ENCODE measurements at regions of chr14 and their contacts with region 1.

Region 1: GRCh38 chr14:73675037-73675436 is 30.3 kb downstream of the DNAL1 start:
- DNase-seq: no peak
- ATAC-seq: no peak
- H3K4me3 ChIP-seq: no peak overlapping the region
- H3K27ac ChIP-seq: no peak overlapping the region
- H3K4me1 ChIP-seq: peaks cover 5% of the 10 kb centered on the region; the same call in 1 of the 3 replicates
- CTCF ChIP-seq: no peak
- EP300 ChIP-seq: no peak
- POLR2A ChIP-seq: no peak
- RAD21 ChIP-seq: no peak

Region 2: DNA sequence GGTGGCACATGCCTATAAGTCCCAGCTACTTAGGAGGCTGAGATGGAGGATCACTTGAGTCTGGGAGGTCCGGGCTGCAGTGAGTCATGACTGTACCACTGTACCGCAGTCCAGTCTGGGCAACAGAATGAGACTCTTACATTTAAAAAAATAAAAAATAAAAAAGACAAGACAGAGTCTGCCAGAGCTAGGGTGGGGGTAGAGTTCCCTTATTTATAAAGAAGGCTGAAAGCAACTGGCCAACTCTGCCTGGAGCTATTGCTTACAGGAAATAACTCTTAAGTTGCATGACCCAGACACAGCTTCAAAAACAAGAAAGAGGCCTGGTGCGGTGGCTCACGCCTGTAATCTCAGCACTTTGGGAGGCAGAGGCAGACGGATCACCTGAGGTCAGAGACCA is 248.2 kb before region 1 on chr14:
- CTCF ChIA-PET with region 1: no interaction called
- POLR2A ChIA-PET with region 1: no interaction called
- DNase-seq: no peak
- ATAC-seq: no peak
- H3K4me3 ChIP-seq: no peak overlapping the region
- H3K27ac ChIP-seq: peak overlapping the region in 1 of 2 experiments; percentile 35; a peak in 3 of 6 replicates
- H3K4me1 ChIP-seq: peaks cover 67% of the 10 kb centered on the region
- CTCF ChIP-seq: no peak
- EP300 ChIP-seq: no peak
- POLR2A ChIP-seq: no peak
- RAD21 ChIP-seq: no peak

Region 3: DNA sequence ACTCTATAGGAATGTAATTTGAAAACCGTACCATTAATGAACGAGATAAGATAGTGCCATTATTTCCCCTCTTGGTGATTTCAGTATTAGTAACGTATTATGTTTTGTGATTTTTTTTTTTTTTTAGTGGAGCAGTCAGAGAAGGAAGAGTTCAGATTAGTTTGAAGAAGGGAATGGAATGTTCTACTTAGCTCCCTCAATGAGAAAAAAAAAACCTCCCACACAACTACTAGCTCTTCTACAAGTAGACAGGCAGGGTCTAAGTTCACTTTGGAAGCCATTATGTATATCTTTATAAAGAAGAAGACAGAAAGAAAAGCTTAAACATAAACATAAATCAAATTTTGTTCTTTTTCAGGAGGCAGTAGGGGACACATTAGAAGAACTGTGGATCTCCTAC is 11.9 kb after region 1 on chr14:
- CTCF ChIA-PET with region 1: interaction called, 10 read pairs
- POLR2A ChIA-PET with region 1: no interaction called
- DNase-seq: no peak
- ATAC-seq: no peak
- H3K4me3 ChIP-seq: no peak overlapping the region
- H3K27ac ChIP-seq: no peak overlapping the region
- H3K4me1 ChIP-seq: no peaks in the 10 kb centered on the region
- CTCF ChIP-seq: no peak
- EP300 ChIP-seq: no peak
- POLR2A ChIP-seq: no peak
- RAD21 ChIP-seq: no peak